SK-N-SH (cell line): ENCODE measurements at regions of chr5 and their contacts with region 1.

Region 1: GRCh38 chr5:147822686-147823491 is 8.6 kb downstream of the SPINK1 start:
- DNase-seq: peak; percentile 48
- H3K4me3 ChIP-seq: peak overlapping the region in 1 of 2 experiments; percentile 42; a peak in 1 of 4 replicates
- H3K27ac ChIP-seq: no peak overlapping the region
- H3K4me1 ChIP-seq: peaks cover 0 to 8% of the 10 kb centered on the region in 2 experiments; a peak in 1 of 4 replicates
- H3K27me3 ChIP-seq: no peaks in the 10 kb centered on the region
- CTCF ChIP-seq: peak; percentile 99
- EP300 ChIP-seq: no peak
- RAD21 ChIP-seq: peak; percentile 100

Region 2: GRCh38 chr5:147617191-147617606 is 205.7 kb before region 1 on chr5:
- CTCF ChIA-PET with region 1: interaction called, 31 read pairs
- POLR2A ChIA-PET with region 1: no interaction called
- DNase-seq: no peak
- H3K4me3 ChIP-seq: no peak overlapping the region
- H3K27ac ChIP-seq: no peak overlapping the region
- H3K4me1 ChIP-seq: no peaks in the 10 kb centered on the region
- H3K27me3 ChIP-seq: no peaks in the 10 kb centered on the region
- CTCF ChIP-seq: no peak
- EP300 ChIP-seq: no peak
- RAD21 ChIP-seq: no peak

Region 3: DNA sequence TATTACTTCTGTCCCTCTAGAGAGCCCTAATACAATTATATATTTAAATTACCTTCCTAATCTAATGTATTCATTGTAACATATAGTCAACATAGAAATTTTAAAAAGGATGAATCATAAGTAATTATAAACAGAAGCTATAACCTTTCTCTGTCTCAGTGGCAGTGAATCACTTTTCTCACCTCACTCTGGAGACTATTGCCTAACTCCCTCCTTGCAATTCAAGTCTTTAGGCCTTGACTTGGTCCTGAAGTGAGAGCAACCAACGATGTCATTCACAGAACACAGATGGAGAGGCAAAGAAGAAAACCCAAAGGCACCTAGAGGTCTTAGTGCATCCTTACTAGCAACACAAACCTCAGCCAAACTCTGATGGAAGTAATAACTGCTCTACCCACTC is 179.7 kb before region 1 on chr5:
- CTCF ChIA-PET with region 1: interaction called, 21 read pairs
- POLR2A ChIA-PET with region 1: no interaction called
- DNase-seq: no peak
- H3K4me3 ChIP-seq: no peak overlapping the region
- H3K27ac ChIP-seq: no peak overlapping the region
- H3K4me1 ChIP-seq: no peaks in the 10 kb centered on the region
- H3K27me3 ChIP-seq: no peaks in the 10 kb centered on the region
- CTCF ChIP-seq: no peak
- EP300 ChIP-seq: no peak
- RAD21 ChIP-seq: no peak

Region 4: DNA sequence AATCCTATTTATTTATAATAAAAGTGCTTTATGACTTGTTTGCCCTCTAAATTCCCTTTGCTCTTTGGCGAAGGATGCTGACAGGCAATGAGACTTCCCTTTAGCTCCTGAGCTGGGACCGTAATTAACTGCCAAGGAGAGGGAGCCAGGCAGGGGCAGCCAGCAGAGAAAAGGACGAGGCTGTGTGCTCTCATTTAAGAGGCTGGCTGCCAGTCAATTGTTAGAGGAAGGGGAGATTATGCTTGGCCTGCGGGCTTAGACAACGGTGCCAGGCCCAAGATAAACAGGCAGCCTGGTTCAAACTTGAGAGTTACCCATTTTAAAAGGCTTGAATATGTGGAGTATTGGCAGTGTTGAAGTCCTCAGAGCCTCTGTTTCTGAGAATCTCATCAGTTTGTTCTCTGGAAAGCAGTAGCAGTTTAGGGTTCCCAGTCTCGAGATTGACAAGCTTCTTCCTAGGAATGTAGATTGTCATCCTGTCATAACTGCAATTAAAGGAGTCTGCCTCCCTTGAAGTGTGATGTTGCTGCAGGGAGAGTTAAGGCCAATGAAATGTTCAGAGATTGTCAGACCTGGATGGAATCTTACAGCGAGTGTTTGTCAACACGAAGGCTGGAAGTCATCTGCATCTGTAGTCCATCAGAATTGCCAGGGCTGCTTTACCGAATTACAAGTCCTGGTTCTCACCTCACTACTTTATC is 153.6 kb before region 1 on chr5:
- CTCF ChIA-PET with region 1: interaction called, 13 read pairs
- POLR2A ChIA-PET with region 1: no interaction called
- DNase-seq: peak; percentile 21
- H3K4me3 ChIP-seq: no peak overlapping the region
- H3K27ac ChIP-seq: no peak overlapping the region; a peak in 1 of 4 replicates
- H3K4me1 ChIP-seq: no peaks in the 10 kb centered on the region; a peak in 1 of 4 replicates
- H3K27me3 ChIP-seq: no peaks in the 10 kb centered on the region
- CTCF ChIP-seq: no peak
- EP300 ChIP-seq: no peak
- RAD21 ChIP-seq: no peak

Region 5: GRCh38 chr5:147782110-147783028 is 40.5 kb before region 1 on chr5 and contains the start of gene JAKMIP2:
- CTCF ChIA-PET with region 1: interaction called, 16 read pairs
- POLR2A ChIA-PET with region 1: no interaction called
- DNase-seq: peak; percentile 88
- H3K4me3 ChIP-seq: peak within 1 kb of the TSS; percentile 69 to 70
- H3K27ac ChIP-seq: peak within 1 kb of the TSS; percentile 54 to 99
- H3K4me1 ChIP-seq: no peaks in the 10 kb centered on the region; a peak in 2 of 4 replicates
- H3K27me3 ChIP-seq: no peaks in the 10 kb centered on the region
- CTCF ChIP-seq: peak; percentile 22
- EP300 ChIP-seq: no peak; a peak in 1 of 4 replicates
- RAD21 ChIP-seq: peak; percentile 43
- polyA plus RNA-seq, gene JAKMIP2: 1.8 and 2.1 TPM in 2 replicates

Region 6: GRCh38 chr5:147805030-147805454 is 17.8 kb before region 1 on chr5:
- CTCF ChIA-PET with region 1: interaction called, 24 read pairs
- POLR2A ChIA-PET with region 1: no interaction called
- DNase-seq: no peak
- H3K4me3 ChIP-seq: no peak overlapping the region
- H3K27ac ChIP-seq: no peak overlapping the region
- H3K4me1 ChIP-seq: peaks cover 0 to 11% of the 10 kb centered on the region in 2 experiments; a peak in 2 of 4 replicates
- H3K27me3 ChIP-seq: no peaks in the 10 kb centered on the region
- CTCF ChIP-seq: no peak
- EP300 ChIP-seq: no peak
- RAD21 ChIP-seq: no peak

Region 7: DNA sequence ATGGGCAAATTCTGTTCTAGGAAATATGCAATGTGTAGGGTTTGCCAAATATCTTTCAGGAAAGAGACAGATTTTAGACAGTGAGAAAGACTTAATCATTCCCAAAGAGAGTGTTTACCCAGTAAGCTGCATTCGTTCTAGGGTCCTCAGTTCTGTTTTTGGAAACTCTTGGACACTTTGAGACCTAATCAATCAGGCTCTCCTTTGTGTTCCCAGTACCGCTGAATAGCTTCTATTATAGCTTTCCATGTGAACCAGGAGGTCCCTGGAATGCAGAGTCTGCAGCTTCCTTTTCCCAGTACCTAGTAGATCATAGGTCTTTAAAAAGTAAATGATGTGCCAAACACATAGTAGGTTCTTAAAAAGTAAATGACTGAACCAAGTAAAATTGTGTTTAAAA is 20.0 kb after region 1 on chr5:
- CTCF ChIA-PET with region 1: interaction called, 22 read pairs
- POLR2A ChIA-PET with region 1: no interaction called
- DNase-seq: no peak
- H3K4me3 ChIP-seq: no peak overlapping the region
- H3K27ac ChIP-seq: no peak overlapping the region
- H3K4me1 ChIP-seq: no peaks in the 10 kb centered on the region
- H3K27me3 ChIP-seq: no peaks in the 10 kb centered on the region
- CTCF ChIP-seq: no peak
- EP300 ChIP-seq: no peak
- RAD21 ChIP-seq: no peak